MCF 10A (cell line): ENCODE measurements at regions of chr7 and their contacts with region 1.

Region 1: GRCh38 chr7:20786779-20787659 is at the start of gene SP8:
- DNase-seq: peak; percentile 62
- H3K4me3 Mint-ChIP-seq: peak within 1 kb of the TSS; percentile 86
- H3K27ac Mint-ChIP-seq: peak within 1 kb of the TSS; percentile 39
- H3K4me1 Mint-ChIP-seq: peaks cover 6% of the 10 kb centered on the region
- H3K27me3 Mint-ChIP-seq: peaks cover 49% of the 10 kb centered on the region
- CTCF ChIP-seq: no peak
- total RNA-seq, gene SP8: 0.16 and 0.71 TPM in 2 replicates

Region 2: DNA sequence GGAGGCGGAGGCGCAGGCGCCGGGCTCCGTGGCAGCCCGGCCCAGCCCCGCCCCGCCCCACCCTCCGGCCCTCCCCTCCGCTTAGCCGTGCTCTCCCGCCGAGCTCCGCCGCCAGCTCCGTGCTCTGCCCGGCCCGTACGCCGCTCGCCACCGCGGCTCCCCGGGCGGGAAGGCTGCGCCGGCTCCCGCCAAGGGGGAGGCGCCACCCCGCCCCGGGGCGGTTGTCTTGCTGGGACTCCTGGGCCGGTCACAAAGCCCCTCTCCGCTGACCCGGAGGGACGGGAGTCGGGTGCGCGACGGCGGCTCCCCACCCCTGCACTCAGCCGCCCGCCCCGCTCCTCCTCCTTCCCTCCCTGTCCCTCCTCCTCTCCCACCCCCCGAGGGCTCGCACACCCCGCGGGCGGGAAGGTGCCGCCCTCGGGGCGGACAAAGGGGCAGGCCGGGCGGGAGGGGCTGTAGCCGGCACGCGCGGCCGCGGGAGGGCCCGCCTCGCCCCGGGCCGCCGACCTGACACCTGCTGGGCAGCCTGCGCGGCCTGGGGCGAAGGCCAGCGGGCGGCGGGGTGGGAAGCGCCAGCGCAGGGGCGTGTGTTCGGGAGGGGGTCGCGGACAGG is 11.2 kb after region 1 on chr7:
- CTCF ChIA-PET with region 1: interaction called, 4 read pairs
- POLR2A ChIA-PET with region 1: interaction called, 19 read pairs
- intact Hi-C with region 1: no loop called
- DNase-seq: peak; percentile 57
- H3K4me3 Mint-ChIP-seq: peak overlapping the region; percentile 82
- H3K27ac Mint-ChIP-seq: no peak overlapping the region
- H3K4me1 Mint-ChIP-seq: peaks cover 5% of the 10 kb centered on the region
- H3K27me3 Mint-ChIP-seq: peaks cover 7% of the 10 kb centered on the region
- CTCF ChIP-seq: no peak

Region 3: GRCh38 chr7:20834656-20835055 is 47.6 kb after region 1 on chr7:
- CTCF ChIA-PET with region 1: interaction called, 3 read pairs
- POLR2A ChIA-PET with region 1: no interaction called
- intact Hi-C with region 1: loop called (anchors 2 kb)
- DNase-seq: peak; percentile 22
- H3K4me3 Mint-ChIP-seq: no peak overlapping the region
- H3K27ac Mint-ChIP-seq: no peak overlapping the region
- H3K4me1 Mint-ChIP-seq: no peaks in the 10 kb centered on the region
- H3K27me3 Mint-ChIP-seq: no peaks in the 10 kb centered on the region
- CTCF ChIP-seq: peak; percentile 36

Region 4: DNA sequence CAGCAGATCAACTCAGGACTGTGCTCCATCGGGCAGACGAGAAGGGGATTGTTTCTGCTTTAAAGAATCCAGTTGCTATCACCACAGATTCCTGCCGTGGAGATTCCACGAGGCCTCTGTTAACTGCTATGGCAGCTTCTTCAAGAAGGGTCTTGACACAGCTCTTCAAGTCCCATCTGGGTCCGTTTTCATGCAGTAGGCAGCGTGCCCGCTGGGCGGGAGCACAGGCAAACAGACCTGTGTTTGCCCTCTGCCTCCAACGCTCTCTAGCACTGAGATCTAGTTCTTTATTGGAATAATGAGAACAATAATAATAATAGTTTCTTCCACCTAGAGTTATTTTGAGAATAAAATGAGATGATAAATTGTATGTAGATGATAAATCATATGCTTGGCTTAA is 126.8 kb after region 1 on chr7:
- CTCF ChIA-PET with region 1: no interaction called
- POLR2A ChIA-PET with region 1: no interaction called
- intact Hi-C with region 1: no loop called
- DNase-seq: no peak
- H3K4me3 Mint-ChIP-seq: no peak overlapping the region
- H3K27ac Mint-ChIP-seq: no peak overlapping the region
- H3K4me1 Mint-ChIP-seq: no peaks in the 10 kb centered on the region
- H3K27me3 Mint-ChIP-seq: no peaks in the 10 kb centered on the region
- CTCF ChIP-seq: no peak